ENCODE measurements at regions of chr3 and their contacts with region 1.

Region 1: DNA sequence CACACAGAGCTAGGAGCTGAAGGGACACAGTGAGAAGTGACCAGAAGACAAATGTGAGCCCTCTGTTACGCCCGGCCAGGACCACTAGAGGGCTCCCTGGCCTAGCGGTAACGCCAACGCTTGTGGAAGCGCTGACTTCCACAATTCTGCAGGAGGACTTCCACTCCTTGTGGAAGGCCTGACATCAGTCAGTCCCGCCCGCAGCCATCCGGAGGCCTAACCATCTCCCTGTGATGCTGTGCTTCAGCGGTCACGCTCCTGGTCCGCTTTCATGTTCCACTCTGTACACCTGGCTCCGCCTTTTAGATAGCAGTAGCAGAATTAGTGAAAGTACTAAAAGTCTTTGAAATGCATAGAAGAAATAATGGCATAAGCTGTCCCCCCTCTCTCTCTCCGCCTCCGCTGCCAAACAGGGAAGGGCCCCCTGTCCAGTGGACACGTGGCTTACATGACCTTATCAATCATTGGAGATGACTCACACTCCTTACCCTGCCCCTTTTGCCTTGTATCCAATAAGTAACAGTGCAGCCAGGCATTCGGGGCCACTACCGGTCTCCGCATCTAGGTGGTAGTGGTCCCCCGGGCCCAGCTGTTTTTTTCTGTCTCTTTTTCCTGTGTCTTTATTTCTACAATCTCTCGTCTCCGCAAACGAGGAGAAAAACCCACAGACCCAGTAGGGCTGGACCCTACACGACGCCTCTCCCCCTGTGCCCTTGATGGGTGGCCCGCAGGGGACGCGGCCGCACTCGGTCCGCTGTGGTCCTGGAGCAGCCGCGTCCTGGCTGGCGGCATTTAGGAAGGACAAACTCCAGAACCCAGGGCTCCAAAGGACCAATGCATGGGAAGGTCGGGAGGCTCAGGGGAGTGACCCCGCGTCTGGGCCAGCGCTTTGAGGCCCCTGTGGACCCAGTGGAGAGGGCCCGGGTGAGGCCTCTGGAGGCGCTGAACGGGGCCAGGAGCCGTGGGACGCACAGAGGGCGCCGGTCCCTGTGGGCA is 27.0 kb upstream of the RPL32 start:
- DNase-seq: peak; percentile 85 to 90 (median 86)
- ATAC-seq: peak; percentile 83 to 96 (median 94)
- H3K4me3 ChIP-seq: peak overlapping the region in 9 of 12 donors; percentile 1 to 47 (median 26)
- H3K27ac ChIP-seq: peak overlapping the region in 1 of 12 donors; percentile 25
- H3K4me1 ChIP-seq: peaks cover 0 to 13% (median 8%) of the 10 kb centered on the region in 12 donors
- H3K27me3 ChIP-seq: peaks cover 0 to 13% (median 0%) of the 10 kb centered on the region in 9 donors
- CTCF ChIP-seq: peak; percentile 80 to 98 (median 92)
- POLR2A ChIP-seq: no peak

Region 2: DNA sequence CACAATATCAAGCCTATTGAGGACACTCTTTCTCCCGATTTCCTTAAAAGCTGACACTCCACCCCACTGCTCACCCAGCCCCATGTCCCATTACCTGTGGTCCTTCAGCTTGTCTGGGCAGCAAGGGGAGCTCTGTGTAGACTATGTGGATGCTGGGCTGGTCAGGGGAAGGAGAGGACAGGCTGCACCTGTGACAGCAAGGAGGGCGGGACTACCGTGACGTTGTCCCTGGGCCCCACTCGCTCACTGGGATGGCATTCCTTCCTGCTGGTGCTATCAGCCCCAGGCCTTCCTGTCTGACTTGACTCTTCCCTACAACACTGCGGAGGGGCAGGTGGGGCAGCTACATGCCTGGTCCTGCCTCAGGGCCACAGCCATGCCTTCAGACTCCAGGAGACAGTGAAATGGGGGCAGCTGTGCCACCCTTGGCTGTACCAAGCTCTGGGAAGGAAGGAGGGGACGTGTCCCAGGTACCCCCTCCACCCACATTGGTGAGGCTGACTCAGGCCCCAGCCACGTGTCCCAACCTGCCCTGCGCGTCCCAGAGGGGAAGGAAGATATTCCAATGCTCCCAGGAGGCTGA is 109.1 kb before region 1 on chr3 and contains the start of gene TMEM40:
- intact Hi-C with region 1: no loop called
- DNase-seq: no peak
- ATAC-seq: no peak
- H3K4me3 ChIP-seq: no peak within 1 kb of the TSS
- H3K27ac ChIP-seq: peak within 1 kb of the TSS in 11 of 12 donors; percentile 14 to 73 (median 46)
- H3K4me1 ChIP-seq: peaks cover 0 to 19% (median 12%) of the 10 kb centered on the region in 12 donors
- H3K27me3 ChIP-seq: no peaks in the 10 kb centered on the region
- CTCF ChIP-seq: no peak
- POLR2A ChIP-seq: no peak
- total RNA-seq, gene TMEM40: 0.95 to 4.2 (median 2.9) TPM in 8 of 9 donors, not detected in the other

Region 3: GRCh38 chr3:13229273-13229949 is 361.1 kb after region 1 on chr3:
- intact Hi-C with region 1: no loop called
- DNase-seq: peak in 1 of 5 donors; percentile 21
- ATAC-seq: no peak
- H3K4me3 ChIP-seq: no peak overlapping the region
- H3K27ac ChIP-seq: no peak overlapping the region
- H3K4me1 ChIP-seq: peaks cover 0 to 16% (median 4%) of the 10 kb centered on the region in 12 donors
- H3K27me3 ChIP-seq: peaks cover 0 to 7% (median 0%) of the 10 kb centered on the region in 9 donors
- CTCF ChIP-seq: peak in 3 of 12 donors; percentile 5 to 18 (median 11)
- POLR2A ChIP-seq: no peak

Region 4: GRCh38 chr3:13479581-13480339 is 611.4 kb after region 1 on chr3 and contains the start of gene HDAC11:
- intact Hi-C with region 1: loop called in 1 of 10 experiments (anchors 10 kb)
- DNase-seq: peak; percentile 100
- ATAC-seq: peak; percentile 97 to 99 (median 98)
- H3K4me3 ChIP-seq: peak within 1 kb of the TSS; percentile 59 to 98 (median 82)
- H3K27ac ChIP-seq: peak within 1 kb of the TSS; percentile 84 to 96 (median 92)
- H3K4me1 ChIP-seq: peaks cover 0 to 31% (median 14%) of the 10 kb centered on the region in 12 donors
- H3K27me3 ChIP-seq: peaks cover 0 to 4% (median 0%) of the 10 kb centered on the region in 9 donors
- CTCF ChIP-seq: peak in 11 of 12 donors; percentile 6 to 61 (median 35)
- POLR2A ChIP-seq: peak; percentile 39 to 88
- total RNA-seq, gene HDAC11: 20.8 to 49.4 (median 30.7) TPM